ENCODE measurements at regions of chr11 and their contacts with region 1.

Region 1: DNA sequence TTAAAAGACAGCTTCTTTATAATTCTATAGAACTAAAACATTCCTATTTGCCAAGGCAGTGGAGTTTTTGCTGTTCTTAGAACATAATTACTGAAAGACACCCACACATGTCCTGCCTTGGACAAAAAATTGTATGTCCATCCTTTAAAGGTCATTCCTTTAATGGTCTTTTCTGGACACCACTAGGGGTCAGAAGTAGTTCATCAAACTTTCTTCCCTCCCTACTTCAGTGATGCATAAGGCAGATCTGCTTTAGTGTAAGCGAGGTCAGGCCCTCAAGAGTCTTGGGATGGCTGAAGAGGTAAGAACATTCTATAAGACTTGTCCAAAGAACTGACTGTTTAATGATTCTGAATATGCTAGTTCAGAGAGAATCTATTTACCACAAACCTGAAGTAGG is 4.3 kb upstream of the OR51V1 start:
- DNase-seq: peak; percentile 71 to 93 (median 80)
- ATAC-seq: peak; percentile 96
- H3K4me3 ChIP-seq: no peak overlapping the region
- H3K27ac ChIP-seq: no peak overlapping the region
- H3K4me1 ChIP-seq: peaks cover 0 to 2% of the 10 kb centered on the region in 2 experiments; a peak in 2 of 5 replicates
- H3K27me3 ChIP-seq: no peaks in the 10 kb centered on the region
- CTCF ChIP-seq: peak; percentile 78 to 89 (median 79)
- EP300 ChIP-seq: peak; percentile 27; the same call in 1 of the 2 replicates
- POLR2A ChIP-seq: no peak
- RAD21 ChIP-seq: peak; percentile 99

Region 2: DNA sequence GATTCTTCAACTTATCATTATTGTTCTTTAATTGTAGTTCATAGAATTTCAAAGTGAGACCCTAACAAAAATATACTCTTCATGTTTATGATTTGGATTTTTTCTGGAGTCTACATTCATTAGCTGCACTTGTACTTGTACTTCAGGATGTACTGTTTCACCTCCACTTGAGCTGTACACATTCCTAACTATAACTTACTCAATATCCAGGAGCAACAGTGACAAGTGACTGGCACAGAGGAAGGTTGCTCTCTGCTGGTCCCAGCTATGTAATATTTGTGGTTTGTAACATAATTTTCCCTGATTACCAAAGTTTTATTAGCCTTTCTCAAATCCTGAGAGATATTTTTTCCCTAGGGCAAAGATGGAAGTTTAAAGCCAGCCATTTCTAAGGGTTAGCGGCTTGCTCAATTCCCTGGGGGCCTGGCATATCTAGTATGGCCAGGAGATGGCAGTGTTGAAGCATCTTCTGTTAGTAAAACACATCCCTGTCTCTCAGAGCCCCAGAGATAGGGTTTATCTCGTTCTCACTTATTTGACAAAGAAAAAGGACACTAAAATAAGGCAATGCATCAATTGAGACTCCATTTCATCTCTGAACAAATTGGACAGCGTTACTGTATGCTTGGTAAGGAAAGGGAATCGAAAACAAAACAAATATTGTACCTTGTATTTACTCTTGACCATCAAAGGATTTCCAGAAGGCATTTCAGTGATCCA is 80.8 kb before region 1 on chr11:
- CTCF ChIA-PET with region 1: interaction called, 11 read pairs
- POLR2A ChIA-PET with region 1: no interaction called
- in situ Hi-C with region 1: loop called (anchors 5 kb)
- intact Hi-C with region 1: loop called (anchors 1 kb)
- DNase-seq: peak; percentile 67 to 91 (median 76)
- ATAC-seq: peak; percentile 97
- H3K4me3 ChIP-seq: no peak overlapping the region
- H3K27ac ChIP-seq: no peak overlapping the region
- H3K4me1 ChIP-seq: peaks cover 0 to 9% of the 10 kb centered on the region in 2 experiments; a peak in 2 of 5 replicates
- H3K27me3 ChIP-seq: no peaks in the 10 kb centered on the region
- CTCF ChIP-seq: peak; percentile 80 to 92 (median 88)
- EP300 ChIP-seq: no peak
- POLR2A ChIP-seq: no peak
- RAD21 ChIP-seq: peak; percentile 97

Region 3: DNA sequence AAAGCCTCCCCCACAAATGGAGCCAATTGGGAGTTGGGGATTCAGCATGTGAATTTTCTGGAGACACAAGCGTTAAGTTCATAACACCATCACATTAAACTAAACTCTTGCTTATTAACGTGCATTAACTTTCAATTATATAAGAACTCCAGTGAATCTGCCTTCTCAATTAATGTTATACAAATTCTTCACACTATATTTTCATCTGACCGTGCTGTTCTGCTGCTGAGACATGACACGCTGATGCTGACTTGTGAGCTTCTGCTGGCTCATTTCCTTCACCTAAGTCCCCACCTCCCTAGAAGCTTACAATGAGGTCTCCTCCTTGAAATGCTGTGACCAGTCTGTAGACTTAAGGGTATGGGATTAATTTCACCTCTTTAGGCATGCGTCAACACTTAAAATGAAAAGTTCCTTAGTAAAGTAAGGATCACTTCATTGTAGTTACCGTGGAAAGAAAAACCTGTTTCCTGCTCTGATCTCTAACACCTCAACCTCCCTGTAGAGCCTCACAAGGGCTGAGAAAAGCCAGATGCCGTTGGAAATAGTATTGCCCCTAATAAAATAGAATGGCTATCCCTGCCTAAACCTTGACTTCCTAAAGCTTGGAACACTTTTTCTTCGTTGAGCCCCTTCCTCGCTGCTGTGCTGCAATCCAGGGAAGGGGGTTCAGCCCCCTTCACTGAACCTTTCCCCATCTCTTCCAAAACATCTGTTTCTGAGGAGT is 47.6 kb after region 1 on chr11:
- CTCF ChIA-PET with region 1: no interaction called
- POLR2A ChIA-PET with region 1: interaction called, 3 read pairs
- in situ Hi-C with region 1: no loop called
- intact Hi-C with region 1: loop called (anchors 2 kb)
- DNase-seq: peak in 3 of 4 experiments; percentile 46 to 72 (median 59)
- ATAC-seq: 0 out of 3 replicates have a peak, but pooled peaks have one; percentile 4
- H3K4me3 ChIP-seq: peak overlapping the region; percentile 58
- H3K27ac ChIP-seq: peak overlapping the region; percentile 73
- H3K4me1 ChIP-seq: peaks cover 11 to 20% of the 10 kb centered on the region in 2 experiments
- H3K27me3 ChIP-seq: no peaks in the 10 kb centered on the region
- CTCF ChIP-seq: no peak
- EP300 ChIP-seq: no peak
- POLR2A ChIP-seq: no peak; the same call in none of the 2 replicates
- RAD21 ChIP-seq: no peak

Region 4: DNA sequence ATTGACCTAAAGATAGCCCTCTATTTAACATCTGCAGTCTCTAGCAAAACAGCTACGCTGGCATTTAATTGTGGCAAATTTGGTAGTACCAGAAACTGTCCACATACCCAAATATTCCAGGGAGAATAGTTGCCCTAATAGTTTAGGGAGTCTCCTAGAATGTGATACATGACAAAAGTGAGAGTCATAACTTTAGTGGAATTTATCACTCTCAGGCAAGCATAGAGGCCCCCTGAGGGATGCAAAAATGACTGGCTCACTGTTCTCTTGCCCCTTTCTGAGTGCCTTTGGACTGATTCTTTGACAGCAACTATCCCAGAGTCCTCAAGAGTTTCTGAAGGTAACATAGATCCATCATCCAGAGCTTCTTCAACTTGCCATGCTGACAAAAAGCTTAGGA is 99.3 kb after region 1 on chr11:
- CTCF ChIA-PET with region 1: no interaction called
- POLR2A ChIA-PET with region 1: no interaction called
- in situ Hi-C with region 1: loop called (anchors 5 kb)
- intact Hi-C with region 1: no loop called
- DNase-seq: no peak
- ATAC-seq: no peak
- H3K4me3 ChIP-seq: no peak overlapping the region
- H3K27ac ChIP-seq: no peak overlapping the region
- H3K4me1 ChIP-seq: peaks cover 0 to 3% of the 10 kb centered on the region in 2 experiments; a peak in 2 of 5 replicates
- H3K27me3 ChIP-seq: no peaks in the 10 kb centered on the region
- CTCF ChIP-seq: no peak
- EP300 ChIP-seq: no peak
- POLR2A ChIP-seq: no peak
- RAD21 ChIP-seq: no peak

Region 5: DNA sequence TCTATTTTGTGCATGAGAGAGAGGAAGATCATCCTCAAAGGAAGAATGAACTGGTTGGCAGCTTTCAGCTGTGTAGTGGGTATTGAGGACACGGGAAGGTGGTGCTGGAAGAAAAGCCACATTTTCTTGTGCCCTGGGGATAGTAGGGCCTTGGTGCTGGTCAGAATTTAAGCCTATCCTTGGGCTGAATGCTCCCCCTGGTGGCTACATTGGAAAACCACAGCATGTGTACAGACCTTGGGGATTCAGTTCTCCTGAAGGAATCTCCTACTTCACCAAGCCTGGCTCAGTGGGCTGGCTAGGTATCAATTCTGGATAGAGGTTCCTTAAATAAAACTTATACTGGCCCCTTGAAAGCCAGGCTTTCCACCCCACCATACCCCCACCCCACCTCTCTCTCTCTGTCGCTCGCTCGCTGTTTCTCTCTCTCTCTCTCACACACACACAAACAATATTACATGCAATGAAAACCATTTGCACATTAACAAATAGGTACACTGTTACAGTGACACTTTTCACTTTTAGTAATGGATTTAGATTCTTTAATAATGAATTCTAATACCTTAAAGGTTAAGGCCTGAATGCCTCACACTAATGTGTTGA is 176.1 kb after region 1 on chr11:
- CTCF ChIA-PET with region 1: no interaction called
- POLR2A ChIA-PET with region 1: no interaction called
- in situ Hi-C with region 1: no loop called
- intact Hi-C with region 1: loop called (anchors 2 kb)
- DNase-seq: peak; percentile 53 to 70 (median 56)
- ATAC-seq: peak; percentile 97
- H3K4me3 ChIP-seq: no peak overlapping the region
- H3K27ac ChIP-seq: no peak overlapping the region
- H3K4me1 ChIP-seq: no peaks in the 10 kb centered on the region; a peak in 1 of 5 replicates
- H3K27me3 ChIP-seq: no peaks in the 10 kb centered on the region
- CTCF ChIP-seq: peak; percentile 59 to 74 (median 69)
- EP300 ChIP-seq: no peak
- POLR2A ChIP-seq: no peak
- RAD21 ChIP-seq: peak; percentile 71 to 73

Region 6: DNA sequence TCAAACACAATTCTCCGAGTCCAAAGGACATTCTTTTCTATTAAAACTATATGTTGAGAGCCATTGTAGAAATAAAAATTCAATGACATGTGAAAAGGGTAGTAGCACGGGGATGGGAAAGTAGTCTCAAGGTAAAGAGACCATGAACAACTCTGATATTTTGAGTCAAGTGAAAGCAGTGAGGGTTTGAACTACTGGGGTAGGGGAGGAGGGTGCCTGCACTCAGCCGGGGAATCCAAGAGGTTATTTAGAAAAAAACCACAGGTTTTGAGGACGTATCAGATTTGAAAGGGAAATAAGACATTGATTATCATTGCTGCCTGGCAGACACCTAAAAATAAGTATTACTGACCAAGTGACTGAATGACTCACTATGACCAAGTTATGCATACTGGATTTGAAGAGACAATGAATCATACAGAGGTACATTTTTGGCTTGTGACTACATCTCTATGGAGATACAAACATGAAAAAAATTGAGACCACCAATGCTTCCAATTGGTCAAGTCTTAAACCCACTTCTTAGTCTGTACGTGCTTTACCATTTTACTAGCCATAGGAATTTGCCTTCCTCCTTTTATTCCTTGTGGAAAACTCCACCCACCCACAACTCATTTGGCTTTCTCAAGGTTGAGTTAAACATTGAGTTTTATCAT is 345.8 kb after region 1 on chr11:
- CTCF ChIA-PET with region 1: interaction called, 3 read pairs
- POLR2A ChIA-PET with region 1: no interaction called
- in situ Hi-C with region 1: no loop called
- intact Hi-C with region 1: loop called (anchors 5 kb)
- DNase-seq: peak in 1 of 4 experiments; percentile 30
- ATAC-seq: peak; percentile 42; the same call in 1 of the 3 replicates
- H3K4me3 ChIP-seq: no peak overlapping the region
- H3K27ac ChIP-seq: no peak overlapping the region
- H3K4me1 ChIP-seq: peaks cover 0 to 6% of the 10 kb centered on the region in 2 experiments; a peak in 2 of 5 replicates
- H3K27me3 ChIP-seq: no peaks in the 10 kb centered on the region; a peak in 1 of 5 replicates
- CTCF ChIP-seq: no peak
- EP300 ChIP-seq: no peak
- POLR2A ChIP-seq: no peak
- RAD21 ChIP-seq: no peak